ENCODE measurements at regions of chr7 and their contacts with region 1.

Region 1: GRCh38 chr7:27080844-27081436 is 14.9 kb downstream of the HOXA1 start:
- DNase-seq: peak; percentile 59 to 94
- H3K4me3 ChIP-seq: peak overlapping the region; percentile 12; the same call in 1 of the 2 replicates
- H3K27ac ChIP-seq: peak overlapping the region; percentile 84
- H3K4me1 ChIP-seq: peaks cover 55% of the 10 kb centered on the region
- H3K27me3 ChIP-seq: no peaks in the 10 kb centered on the region
- CTCF ChIP-seq: no peak

Region 2: GRCh38 chr7:26948617-26949118 is 132.3 kb before region 1 on chr7:
- CTCF ChIA-PET with region 1: no interaction called
- POLR2A ChIA-PET with region 1: no interaction called
- intact Hi-C with region 1: no loop called
- DNase-seq: peak in 1 of 2 experiments; percentile 34
- H3K4me3 ChIP-seq: no peak overlapping the region
- H3K27ac ChIP-seq: no peak overlapping the region
- H3K4me1 ChIP-seq: no peaks in the 10 kb centered on the region
- H3K27me3 ChIP-seq: no peaks in the 10 kb centered on the region
- CTCF ChIP-seq: no peak

Region 3: DNA sequence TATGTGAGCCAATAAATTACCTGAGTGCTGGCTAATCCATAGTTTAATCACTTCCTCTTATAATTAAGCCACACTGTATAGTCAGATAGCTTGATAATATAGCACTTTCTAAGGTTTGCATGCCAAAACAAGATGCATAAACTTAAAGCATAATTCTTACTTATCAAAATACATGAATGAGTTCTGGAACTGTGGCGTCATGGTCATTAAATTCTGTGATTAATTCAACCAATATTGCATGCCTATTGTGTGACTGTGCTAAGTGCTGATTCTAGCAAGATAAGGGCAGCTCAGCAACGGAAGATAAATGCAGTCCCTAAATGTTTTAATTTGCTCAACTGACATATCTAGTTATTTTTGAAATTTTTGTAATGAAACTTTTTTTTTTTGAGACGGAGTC is 14.8 kb before region 1 on chr7:
- CTCF ChIA-PET with region 1: interaction called, 9 read pairs
- POLR2A ChIA-PET with region 1: interaction called, 5 read pairs
- intact Hi-C with region 1: loop called (anchors 2 kb)
- DNase-seq: peak in 1 of 2 experiments; percentile 90
- H3K4me3 ChIP-seq: no peak overlapping the region
- H3K27ac ChIP-seq: peak overlapping the region; percentile 30
- H3K4me1 ChIP-seq: peaks cover 60% of the 10 kb centered on the region
- H3K27me3 ChIP-seq: no peaks in the 10 kb centered on the region
- CTCF ChIP-seq: no peak

Region 4: GRCh38 chr7:27104341-27105058 is 23.6 kb after region 1 on chr7:
- CTCF ChIA-PET with region 1: no interaction called
- POLR2A ChIA-PET with region 1: interaction called, 14 read pairs
- intact Hi-C with region 1: no loop called
- DNase-seq: no peak
- H3K4me3 ChIP-seq: no peak overlapping the region
- H3K27ac ChIP-seq: no peak overlapping the region
- H3K4me1 ChIP-seq: 0 out of 2 replicates have a peak, but pooled peaks cover 2% of the 10 kb centered on the region
- H3K27me3 ChIP-seq: no peaks in the 10 kb centered on the region
- CTCF ChIP-seq: no peak

Measured in PC-9 (cell line).